Astrocyte of the cerebellum (primary cell): ENCODE measurements at regions of chr11 and their contacts with region 1.

Region 1: GRCh38 chr11:13152736-13153533 is 124.7 kb upstream of the BMAL1 start:
- DNase-seq: no peak
- H3K4me3 ChIP-seq: no peak overlapping the region
- CTCF ChIP-seq: peak; percentile 51

Region 2: GRCh38 chr11:12693479-12694181 is 459.3 kb before region 1 on chr11:
- in situ Hi-C with region 1: no loop called
- DNase-seq: peak; percentile 99
- H3K4me3 ChIP-seq: peak overlapping the region; percentile 18
- CTCF ChIP-seq: no peak

Region 3: DNA sequence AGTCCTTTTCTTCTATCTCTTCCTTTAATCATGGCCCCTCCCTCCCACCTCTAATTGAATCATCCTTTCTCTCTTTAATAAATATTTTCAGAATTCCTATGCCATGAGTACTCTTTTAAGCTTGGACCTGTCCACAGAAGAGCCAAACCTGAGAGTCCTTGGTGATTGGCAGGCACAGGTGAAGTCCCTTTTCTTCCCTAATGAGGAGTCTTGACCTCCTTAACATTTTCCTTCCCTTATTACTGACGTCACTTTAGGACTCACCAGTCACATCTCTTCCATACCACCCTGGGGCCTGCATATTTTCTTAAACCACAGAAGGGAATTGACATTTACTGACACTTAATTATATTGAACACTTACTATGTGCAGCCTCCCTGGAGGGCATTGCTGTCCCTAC is 184.8 kb before region 1 on chr11:
- in situ Hi-C with region 1: no loop called
- DNase-seq: no peak
- H3K4me3 ChIP-seq: no peak overlapping the region
- CTCF ChIP-seq: no peak

Region 4: GRCh38 chr11:12989428-12990161 is 163.3 kb before region 1 on chr11:
- in situ Hi-C with region 1: loop called (anchors 25 kb)
- DNase-seq: no peak
- H3K4me3 ChIP-seq: no peak overlapping the region
- CTCF ChIP-seq: no peak